ENCODE measurements at regions of chr18 and their contacts with region 1.

Region 1: GRCh38 chr18:74495581-74496507 is at the start of gene CNDP2:
- DNase-seq: peak; percentile 100
- H3K4me3 Mint-ChIP-seq: peak within 1 kb of the TSS; percentile 90
- H3K27ac Mint-ChIP-seq: peak within 1 kb of the TSS; percentile 100
- H3K4me1 Mint-ChIP-seq: peaks cover 42% of the 10 kb centered on the region
- H3K27me3 Mint-ChIP-seq: peaks cover 12% of the 10 kb centered on the region
- total RNA-seq, gene CNDP2: 160 and 177 TPM in 2 replicates

Region 2: GRCh38 chr18:73959352-73959751 is 536.5 kb before region 1 on chr18:
- intact Hi-C with region 1: no loop called
- DNase-seq: no peak
- H3K4me3 Mint-ChIP-seq: no peak overlapping the region
- H3K27ac Mint-ChIP-seq: no peak overlapping the region
- H3K4me1 Mint-ChIP-seq: peaks cover 11% of the 10 kb centered on the region
- H3K27me3 Mint-ChIP-seq: no peaks in the 10 kb centered on the region

Region 3: GRCh38 chr18:74063023-74063422 is 432.8 kb before region 1 on chr18:
- intact Hi-C with region 1: loop called (anchors 5 kb)
- DNase-seq: peak; percentile 83
- H3K4me3 Mint-ChIP-seq: peak overlapping the region; percentile 82
- H3K27ac Mint-ChIP-seq: peak overlapping the region; percentile 84
- H3K4me1 Mint-ChIP-seq: peaks cover 48% of the 10 kb centered on the region
- H3K27me3 Mint-ChIP-seq: no peaks in the 10 kb centered on the region

Region 4: GRCh38 chr18:74196220-74197119 is 299.4 kb before region 1 on chr18:
- intact Hi-C with region 1: loop called (anchors 1 kb)
- DNase-seq: peak; percentile 82
- H3K4me3 Mint-ChIP-seq: peak overlapping the region; percentile 81
- H3K27ac Mint-ChIP-seq: peak overlapping the region; percentile 11
- H3K4me1 Mint-ChIP-seq: peaks cover 2% of the 10 kb centered on the region
- H3K27me3 Mint-ChIP-seq: peaks cover 2% of the 10 kb centered on the region

Region 5: DNA sequence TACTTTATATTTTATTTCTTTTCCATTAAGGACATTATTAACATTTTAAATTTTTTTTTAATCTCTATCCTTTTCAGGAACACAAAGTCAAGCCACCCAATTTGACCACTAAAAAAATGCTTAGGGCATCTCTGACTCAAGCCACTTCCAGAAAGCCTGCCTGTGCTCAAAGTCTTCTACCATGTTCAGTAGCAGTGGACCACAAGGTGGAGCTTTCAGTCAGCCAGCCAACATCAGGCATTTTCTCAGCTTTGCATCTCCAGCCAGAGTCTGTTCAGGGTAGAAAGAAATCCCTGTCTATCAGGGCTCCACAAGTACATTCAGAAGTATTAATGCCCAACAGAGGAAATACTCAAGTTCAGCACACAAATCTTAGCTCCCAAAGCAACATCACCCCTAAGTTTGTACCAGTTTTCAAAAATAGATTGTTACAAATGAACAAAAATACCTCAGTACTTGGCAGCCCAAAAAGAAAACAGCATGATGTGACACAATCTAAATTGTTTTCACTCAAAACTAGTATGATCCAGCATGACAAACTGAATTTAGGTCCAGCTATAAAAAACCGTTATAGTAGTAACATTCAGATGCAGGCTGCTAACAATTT is 142.6 kb before region 1 on chr18:
- intact Hi-C with region 1: loop called (anchors 1 kb)
- DNase-seq: peak; percentile 88
- H3K4me3 Mint-ChIP-seq: no peak overlapping the region
- H3K27ac Mint-ChIP-seq: no peak overlapping the region
- H3K4me1 Mint-ChIP-seq: peaks cover 20% of the 10 kb centered on the region
- H3K27me3 Mint-ChIP-seq: peaks cover 19% of the 10 kb centered on the region

Region 6: GRCh38 chr18:74551936-74552555 is 56.2 kb after region 1 on chr18:
- intact Hi-C with region 1: loop called (anchors 2 kb)
- DNase-seq: peak; percentile 92
- H3K4me3 Mint-ChIP-seq: no peak overlapping the region
- H3K27ac Mint-ChIP-seq: peak overlapping the region; percentile 59
- H3K4me1 Mint-ChIP-seq: peaks cover 9% of the 10 kb centered on the region
- H3K27me3 Mint-ChIP-seq: peaks cover 4% of the 10 kb centered on the region

Region 7: DNA sequence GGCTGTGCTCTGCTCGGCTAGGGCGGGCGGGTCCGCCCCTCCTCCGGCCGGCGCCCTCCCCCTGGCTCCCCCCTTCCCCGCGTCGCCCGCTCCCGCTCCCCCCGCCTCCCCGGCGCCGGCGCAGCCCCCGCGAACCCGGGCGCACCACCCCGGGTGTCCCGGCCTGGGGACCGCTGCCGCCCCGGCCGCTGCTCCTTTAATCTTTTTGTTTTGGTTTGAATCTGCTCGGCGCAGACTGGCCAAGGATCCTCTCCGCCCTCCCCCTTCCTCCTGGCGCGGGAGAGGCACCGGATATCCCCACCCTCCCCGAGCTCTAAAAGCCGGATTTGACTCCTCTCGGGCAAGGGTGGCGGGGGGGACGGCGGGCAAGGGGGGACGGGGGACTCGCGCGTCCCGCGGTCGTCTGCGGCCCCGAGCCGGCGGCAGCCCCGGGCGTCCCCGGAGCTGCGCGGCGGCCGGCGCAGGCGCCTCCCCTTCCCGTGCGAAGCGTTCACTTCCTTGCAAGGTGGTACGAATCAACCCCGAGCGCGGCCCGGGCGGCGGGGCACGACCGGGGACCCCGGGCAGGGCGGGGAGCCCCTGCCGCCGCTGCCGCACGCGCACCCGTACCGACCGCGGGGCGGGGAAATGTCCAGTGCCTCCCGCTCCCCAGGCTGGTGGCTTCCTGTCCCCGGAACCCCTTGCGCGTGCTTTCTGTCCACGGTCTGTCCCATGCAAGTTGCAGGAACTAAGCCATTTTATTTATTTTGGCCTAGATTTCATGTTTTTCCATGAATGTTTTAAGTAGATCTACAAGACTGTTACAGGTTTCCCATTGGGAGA is 713.5 kb after region 1 on chr18 and contains the start of gene PTGR3:
- intact Hi-C with region 1: loop called (anchors 1 kb)
- DNase-seq: peak; percentile 94
- H3K4me3 Mint-ChIP-seq: peak within 1 kb of the TSS; percentile 97
- H3K27ac Mint-ChIP-seq: peak within 1 kb of the TSS; percentile 96
- H3K4me1 Mint-ChIP-seq: peaks cover 50% of the 10 kb centered on the region
- H3K27me3 Mint-ChIP-seq: peaks cover 24% of the 10 kb centered on the region
- total RNA-seq, gene PTGR3: 23.3 and 23.6 TPM in 2 replicates